Tibial artery (tissue), 4 donors: ENCODE measurements at regions of chr14 and their contacts with region 1.

Region 1: DNA sequence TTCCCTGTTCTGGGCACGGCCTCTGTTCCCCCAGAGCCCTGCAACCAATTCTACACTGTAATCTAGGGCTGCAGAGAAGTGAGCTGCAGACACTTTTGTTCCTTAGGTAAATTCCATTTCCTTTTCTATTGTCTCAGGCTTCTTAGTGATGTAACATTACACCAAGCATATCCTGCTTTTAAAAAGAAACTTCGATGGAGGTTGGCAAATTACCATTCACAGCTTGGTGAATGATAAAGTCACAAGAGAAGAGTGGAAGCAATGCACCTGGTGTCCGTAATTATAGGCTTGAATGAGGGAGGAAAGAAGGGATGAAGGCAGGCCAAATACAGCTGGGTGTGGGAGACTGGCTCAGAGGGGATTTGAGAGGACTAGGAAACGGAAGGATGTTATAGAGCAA is 68.6 kb downstream of the PPM1A start:
- DNase-seq: no peak
- H3K4me3 ChIP-seq: no peak overlapping the region
- H3K27ac ChIP-seq: no peak overlapping the region
- H3K4me1 ChIP-seq: no peaks in the 10 kb centered on the region
- H3K27me3 ChIP-seq: peaks cover 0 to 20% of the 10 kb centered on the region in 2 donors
- CTCF ChIP-seq: no peak

Region 2: GRCh38 chr14:60204843-60205774 is 112.5 kb before region 1 on chr14:
- intact Hi-C with region 1: loop called (anchors 5 kb)
- DNase-seq: no peak
- H3K4me3 ChIP-seq: no peak overlapping the region
- H3K27ac ChIP-seq: no peak overlapping the region
- H3K4me1 ChIP-seq: no peaks in the 10 kb centered on the region
- H3K27me3 ChIP-seq: peaks cover 0 to 3% of the 10 kb centered on the region in 2 donors
- CTCF ChIP-seq: no peak